ENCODE measurements at regions of chr1 and their contacts with region 1.

Region 1: GRCh38 chr1:25624156-25624555 is 7.6 kb downstream of the MAN1C1 start:
- DNase-seq: no peak
- ATAC-seq: no peak
- H3K4me3 ChIP-seq: no peak overlapping the region
- H3K27ac ChIP-seq: no peak overlapping the region
- H3K4me1 ChIP-seq: peaks cover 6 to 40% (median 21%) of the 10 kb centered on the region in 9 donors
- H3K27me3 ChIP-seq: no peaks in the 10 kb centered on the region
- CTCF ChIP-seq: no peak

Region 2: DNA sequence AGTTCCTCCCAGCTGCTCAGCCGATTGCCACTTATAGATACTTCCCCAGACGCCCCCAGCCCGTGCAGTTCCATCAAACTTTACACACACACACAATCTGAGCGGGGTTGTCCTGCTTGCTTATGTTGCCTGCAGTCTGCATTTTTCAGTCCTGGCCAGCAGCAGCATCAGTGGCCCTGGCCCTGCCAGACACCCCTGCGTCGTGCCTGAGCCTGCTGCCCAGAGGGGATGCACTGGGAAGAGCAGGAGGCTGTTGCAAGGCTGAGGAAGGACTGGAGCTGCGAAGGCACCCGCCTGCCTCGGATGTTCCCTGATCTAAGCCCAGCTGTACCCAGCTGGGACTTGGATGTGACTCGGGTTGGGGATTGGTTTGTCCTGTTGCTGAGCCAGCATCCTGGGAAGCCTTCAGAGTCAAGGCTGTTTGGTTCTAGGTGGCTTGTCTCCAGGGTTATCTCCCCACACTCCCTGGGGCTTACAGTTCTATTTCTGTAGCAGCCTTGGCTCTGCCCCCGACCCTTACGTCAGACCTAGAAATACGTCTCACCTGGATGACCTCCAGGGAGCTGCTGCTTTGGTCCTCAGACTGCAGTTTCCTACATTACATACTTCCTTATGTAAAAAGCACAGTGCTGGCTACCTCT is 34.8 kb after region 1 on chr1:
- intact Hi-C with region 1: loop called in 1 of 10 experiments (anchors 5 kb)
- DNase-seq: peak; percentile 65 to 78
- ATAC-seq: peak; percentile 79 to 96 (median 93)
- H3K4me3 ChIP-seq: no peak overlapping the region
- H3K27ac ChIP-seq: peak overlapping the region in 9 of 10 donors; percentile 12 to 82 (median 67)
- H3K4me1 ChIP-seq: peaks cover 13 to 83% (median 42%) of the 10 kb centered on the region in 9 donors
- H3K27me3 ChIP-seq: no peaks in the 10 kb centered on the region
- CTCF ChIP-seq: no peak

Region 3: DNA sequence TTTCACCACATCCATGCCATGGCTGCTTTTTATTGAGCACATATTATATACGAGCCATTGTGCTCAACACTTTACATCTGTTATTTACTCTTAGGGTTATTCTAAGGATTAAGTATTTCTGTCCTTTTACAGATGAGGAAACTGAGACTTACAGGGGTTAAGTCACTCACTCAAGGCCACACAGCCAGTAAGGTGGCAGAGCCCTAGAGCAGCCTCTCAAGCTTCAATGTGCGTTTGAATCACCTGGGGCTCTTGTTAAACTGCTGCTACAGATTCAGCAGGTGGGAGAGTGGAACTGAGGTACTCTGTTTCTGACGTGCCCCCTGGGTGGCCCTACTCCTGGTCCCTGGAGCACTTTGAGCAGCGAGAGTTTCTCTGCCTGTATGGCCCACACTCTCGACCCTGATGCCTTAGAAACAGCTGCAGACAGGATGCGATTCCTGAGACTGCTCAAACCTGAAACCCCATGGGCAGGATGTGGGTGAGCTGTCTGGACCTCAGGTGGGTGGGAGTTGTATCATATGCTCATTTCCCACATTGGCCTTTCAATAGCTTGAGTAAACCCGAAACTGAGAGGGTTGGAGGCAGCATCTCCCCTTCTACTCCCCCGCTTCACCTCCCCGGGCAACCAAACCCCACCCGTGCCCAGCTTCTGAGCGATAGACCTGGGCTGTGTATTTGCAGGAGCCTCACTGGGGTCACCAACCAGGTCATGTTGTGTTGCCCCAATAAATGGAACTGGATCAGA is 51.7 kb after region 1 on chr1:
- intact Hi-C with region 1: loop called in 3 of 10 experiments (anchors 10 kb)
- DNase-seq: no peak
- ATAC-seq: peak in 3 of 8 donors; percentile 6 to 22 (median 9)
- H3K4me3 ChIP-seq: no peak overlapping the region
- H3K27ac ChIP-seq: no peak overlapping the region
- H3K4me1 ChIP-seq: peaks cover 6 to 47% (median 27%) of the 10 kb centered on the region in 9 donors
- H3K27me3 ChIP-seq: no peaks in the 10 kb centered on the region
- CTCF ChIP-seq: no peak

Region 4: DNA sequence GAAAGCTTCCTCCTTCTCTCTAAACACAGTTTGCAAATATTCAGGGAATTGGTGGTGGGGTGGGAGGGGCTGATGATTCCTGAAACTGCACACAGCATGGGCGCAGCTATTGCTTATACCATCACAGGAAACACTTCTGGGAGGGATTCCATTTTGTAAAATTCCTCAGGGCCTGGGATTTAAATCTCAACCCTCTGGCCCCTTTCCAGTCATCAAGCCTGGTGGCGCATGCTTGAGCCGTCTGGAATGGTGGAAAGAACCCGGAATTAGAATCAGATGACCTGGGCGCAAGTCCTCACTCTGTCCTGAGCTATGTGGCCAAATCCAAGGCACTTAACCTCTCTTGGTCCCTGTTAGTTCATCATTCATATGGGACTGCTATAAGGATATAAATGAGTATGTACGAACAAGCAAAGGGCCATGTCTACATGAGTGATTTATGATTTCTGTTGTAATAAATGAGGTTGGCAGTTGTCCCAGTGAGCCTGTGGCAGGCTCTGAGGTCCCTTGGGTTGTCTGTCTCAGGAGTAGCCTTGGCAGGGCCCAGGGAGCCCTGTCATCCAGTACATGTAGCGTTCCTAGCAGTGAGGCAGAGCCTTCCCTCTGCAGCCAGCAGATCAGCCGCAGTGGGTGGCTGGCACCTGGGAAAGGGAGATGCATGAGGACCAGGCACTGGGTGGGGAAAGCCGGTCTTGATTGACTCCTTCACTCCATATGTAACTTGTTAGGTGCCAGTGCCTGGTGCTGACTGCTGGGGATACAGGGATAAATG is 64.4 kb after region 1 on chr1:
- intact Hi-C with region 1: loop called in 4 of 10 experiments (anchors 5 to 10 kb)
- DNase-seq: peak in 1 of 2 donors; percentile 30
- ATAC-seq: peak in 7 of 8 donors; percentile 26 to 65 (median 42)
- H3K4me3 ChIP-seq: no peak overlapping the region
- H3K27ac ChIP-seq: peak overlapping the region in 9 of 10 donors; percentile 22 to 80 (median 55)
- H3K4me1 ChIP-seq: peaks cover 11 to 54% (median 24%) of the 10 kb centered on the region in 9 donors
- H3K27me3 ChIP-seq: no peaks in the 10 kb centered on the region
- CTCF ChIP-seq: no peak

Measured in heart right ventricle (tissue), 16 donors.